Dendritic cell treated with granulocyte-macrophage colony-stimulating factor and Interleukin-4, amounts not matched to agents 40 ng/mL and 50 ng/mL, for 4 days (primary cell): ENCODE measurements at regions of chr5 and their contacts with region 1.

Region 1: DNA sequence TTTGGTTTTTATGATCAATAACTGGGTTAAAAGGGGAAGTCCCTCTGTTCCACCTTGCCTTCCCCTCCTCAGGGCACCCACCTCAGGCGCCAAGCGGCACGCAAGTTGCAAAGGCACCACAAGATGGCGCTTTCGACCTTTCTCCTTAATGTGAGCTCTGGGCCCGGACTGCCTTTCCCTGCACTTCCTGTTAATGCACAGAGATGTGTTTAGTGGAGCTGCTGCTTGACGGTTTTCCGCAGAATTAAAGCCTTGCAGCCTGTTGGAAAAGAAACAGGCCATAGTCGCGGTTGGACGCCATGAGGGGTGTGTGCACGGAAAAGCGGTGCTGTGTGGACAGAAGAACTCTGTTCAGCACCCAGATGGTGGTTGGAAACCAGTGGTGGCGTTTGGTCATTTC is 17.9 kb downstream of the CXCL14 start:
- H3K4me3 Mint-ChIP-seq: no peak overlapping the region
- H3K27ac Mint-ChIP-seq: no peak overlapping the region
- H3K4me1 Mint-ChIP-seq: peaks cover 13% of the 10 kb centered on the region
- H3K27me3 Mint-ChIP-seq: peaks cover 61% of the 10 kb centered on the region

Region 2: GRCh38 chr5:134468602-134469400 is 1092.1 kb before region 1 on chr5:
- intact Hi-C with region 1: no loop called
- H3K4me3 Mint-ChIP-seq: no peak overlapping the region
- H3K27ac Mint-ChIP-seq: no peak overlapping the region
- H3K4me1 Mint-ChIP-seq: peaks cover 29% of the 10 kb centered on the region
- H3K27me3 Mint-ChIP-seq: no peaks in the 10 kb centered on the region

Region 3: DNA sequence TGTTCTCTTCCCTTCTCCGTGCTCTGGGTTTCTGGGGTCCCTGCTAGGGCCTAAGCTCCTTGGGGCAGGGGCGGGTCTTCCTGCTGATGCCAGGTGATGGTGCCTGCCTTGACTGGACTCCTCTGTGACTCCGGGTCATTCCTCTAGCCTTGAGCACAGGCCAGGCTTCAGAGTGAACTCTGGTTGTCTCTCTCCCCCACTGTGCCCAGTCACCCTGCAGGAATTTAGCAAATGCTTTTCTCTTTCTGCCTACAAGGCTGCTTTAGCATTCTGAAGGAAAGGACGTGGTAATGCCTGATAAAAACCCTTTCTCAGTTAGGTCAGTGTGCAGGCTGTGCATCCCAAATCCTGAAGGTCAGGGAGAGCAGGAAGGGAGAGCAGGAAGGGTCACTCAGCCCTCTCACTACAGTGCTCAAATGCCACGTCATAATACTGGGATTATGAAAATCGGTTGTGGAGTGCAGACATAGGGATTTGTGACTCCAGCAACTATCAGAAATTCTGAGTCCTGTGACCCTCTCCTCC is 15.3 kb after region 1 on chr5:
- intact Hi-C with region 1: no loop called
- H3K4me3 Mint-ChIP-seq: no peak overlapping the region
- H3K27ac Mint-ChIP-seq: no peak overlapping the region
- H3K4me1 Mint-ChIP-seq: peaks cover 22% of the 10 kb centered on the region
- H3K27me3 Mint-ChIP-seq: peaks cover 58% of the 10 kb centered on the region

Region 4: GRCh38 chr5:135602882-135603721 is 42.2 kb after region 1 on chr5:
- intact Hi-C with region 1: no loop called
- H3K4me3 Mint-ChIP-seq: no peak overlapping the region
- H3K27ac Mint-ChIP-seq: no peak overlapping the region
- H3K4me1 Mint-ChIP-seq: peaks cover 4% of the 10 kb centered on the region
- H3K27me3 Mint-ChIP-seq: peaks cover 17% of the 10 kb centered on the region

Region 5: DNA sequence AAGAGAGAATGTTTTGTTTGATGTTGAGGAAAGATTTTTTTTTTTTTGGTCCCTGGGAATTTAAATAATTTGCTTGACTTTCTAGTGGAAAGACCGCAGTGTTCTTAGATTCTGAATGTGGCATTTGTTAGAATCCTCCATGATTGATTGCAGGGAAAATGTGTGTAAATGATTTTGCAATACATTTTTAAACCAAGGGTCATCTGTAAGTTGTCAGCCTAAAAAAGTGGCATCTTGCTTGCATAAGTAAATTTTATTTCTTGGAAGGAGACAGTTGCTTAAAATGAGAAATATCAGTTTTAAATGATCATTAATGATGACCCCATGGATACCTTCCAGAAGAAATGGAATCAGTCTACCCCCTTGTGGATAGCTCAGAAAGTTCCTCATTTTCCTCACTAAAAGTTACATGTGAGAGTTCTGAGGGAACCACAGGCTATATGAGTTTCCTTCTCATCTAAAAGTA is 168.5 kb after region 1 on chr5:
- intact Hi-C with region 1: loop called (anchors 10 kb)
- H3K4me3 Mint-ChIP-seq: no peak overlapping the region
- H3K27ac Mint-ChIP-seq: no peak overlapping the region
- H3K4me1 Mint-ChIP-seq: no peaks in the 10 kb centered on the region
- H3K27me3 Mint-ChIP-seq: no peaks in the 10 kb centered on the region

Region 6: DNA sequence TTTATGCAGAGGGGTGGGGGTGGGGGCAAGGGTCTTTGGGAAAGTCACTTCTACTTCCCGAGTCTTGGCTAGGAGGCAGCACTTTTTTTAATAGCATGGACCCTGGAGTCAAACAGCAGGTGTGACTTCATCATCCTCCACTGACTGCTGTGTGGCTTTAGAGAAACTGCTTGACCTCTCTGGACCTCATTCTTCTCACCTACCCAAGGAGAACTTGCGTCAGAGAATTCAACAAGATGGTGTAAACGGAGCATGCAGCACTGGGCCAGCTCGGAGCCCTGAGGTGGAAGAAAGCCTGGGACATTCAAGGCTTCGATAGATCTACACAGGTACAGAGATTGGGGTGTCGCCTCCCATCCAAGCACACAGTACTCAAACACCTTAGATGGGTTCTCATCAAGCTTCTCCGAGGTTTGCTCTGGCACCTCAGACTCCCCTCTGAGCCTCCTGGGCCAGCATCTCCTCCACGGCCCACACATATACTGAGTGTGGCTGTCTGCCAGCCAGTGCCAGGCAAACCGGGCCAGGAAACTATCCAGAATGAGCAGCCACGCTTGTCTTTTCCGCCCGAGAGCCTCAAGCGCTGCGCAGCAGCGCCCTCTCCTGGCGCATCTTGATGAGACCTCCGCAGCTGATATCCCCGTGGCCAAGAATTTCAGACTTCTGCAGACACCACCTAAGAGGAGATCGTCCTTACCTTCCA is 269.0 kb after region 1 on chr5:
- intact Hi-C with region 1: loop called (anchors 1 kb)
- H3K4me3 Mint-ChIP-seq: no peak overlapping the region
- H3K27ac Mint-ChIP-seq: peak overlapping the region; percentile 9
- H3K4me1 Mint-ChIP-seq: peaks cover 37% of the 10 kb centered on the region
- H3K27me3 Mint-ChIP-seq: peaks cover 66% of the 10 kb centered on the region

Region 7: GRCh38 chr5:136212252-136212721 is 651.4 kb after region 1 on chr5:
- intact Hi-C with region 1: loop called (anchors 5 kb)
- H3K4me3 Mint-ChIP-seq: no peak overlapping the region
- H3K27ac Mint-ChIP-seq: no peak overlapping the region
- H3K4me1 Mint-ChIP-seq: no peaks in the 10 kb centered on the region
- H3K27me3 Mint-ChIP-seq: peaks cover 23% of the 10 kb centered on the region